ENCODE measurements at regions of chr15 and their contacts with region 1.

Region 1: DNA sequence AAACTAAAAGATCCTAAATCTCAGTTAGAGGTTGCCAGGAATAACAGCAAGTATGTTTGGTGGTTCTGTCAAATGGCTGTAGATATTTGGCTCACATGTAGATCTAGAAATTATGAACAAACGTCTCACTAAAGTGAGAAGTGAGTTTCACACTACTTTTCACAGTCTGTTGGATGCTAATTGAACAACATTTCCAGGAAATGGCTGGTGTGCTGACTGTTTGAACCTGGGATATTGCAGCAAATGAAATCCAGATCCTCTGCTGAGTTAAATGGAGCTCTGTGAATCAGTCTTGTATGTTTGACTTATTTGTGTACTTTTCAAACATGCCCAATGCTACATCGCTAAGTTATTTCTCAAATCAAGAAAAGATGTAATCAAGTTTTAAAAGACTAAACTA is 21.3 kb upstream of the RSL24D1 start:
- DNase-seq: no peak
- H3K4me3 ChIP-seq: no peak overlapping the region
- CTCF ChIP-seq: no peak

Region 2: GRCh38 chr15:55318588-55319494 is 100.8 kb after region 1 on chr15 and contains the starts of genes PIGB and PIGBOS1:
- in situ Hi-C with region 1: loop called (anchors 10 kb)
- DNase-seq: peak; percentile 71
- H3K4me3 ChIP-seq: peak within 1 kb of the TSS; percentile 66
- CTCF ChIP-seq: no peak

Region 3: DNA sequence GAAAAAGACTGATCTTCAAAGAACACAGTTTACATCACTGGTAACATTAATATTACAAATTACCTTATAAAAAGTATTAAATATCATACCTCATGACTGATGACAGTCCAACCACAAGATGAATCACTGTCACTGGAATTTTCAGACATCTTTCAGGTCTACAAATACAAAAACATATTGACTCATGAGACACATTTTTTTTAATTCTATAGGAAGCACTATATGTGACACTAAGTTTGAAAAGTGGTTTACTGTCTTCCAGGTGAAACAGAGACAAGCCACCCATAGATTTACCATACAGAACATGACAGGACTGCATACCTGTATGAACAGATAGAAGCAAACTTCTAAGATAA is 171.2 kb after region 1 on chr15:
- in situ Hi-C with region 1: loop called (anchors 10 kb)
- DNase-seq: no peak
- H3K4me3 ChIP-seq: no peak overlapping the region
- CTCF ChIP-seq: no peak

Measured in astrocyte of the cerebellum (primary cell).